G401 (cell line): ENCODE measurements at regions of chr11 and their contacts with region 1.

Region 1: DNA sequence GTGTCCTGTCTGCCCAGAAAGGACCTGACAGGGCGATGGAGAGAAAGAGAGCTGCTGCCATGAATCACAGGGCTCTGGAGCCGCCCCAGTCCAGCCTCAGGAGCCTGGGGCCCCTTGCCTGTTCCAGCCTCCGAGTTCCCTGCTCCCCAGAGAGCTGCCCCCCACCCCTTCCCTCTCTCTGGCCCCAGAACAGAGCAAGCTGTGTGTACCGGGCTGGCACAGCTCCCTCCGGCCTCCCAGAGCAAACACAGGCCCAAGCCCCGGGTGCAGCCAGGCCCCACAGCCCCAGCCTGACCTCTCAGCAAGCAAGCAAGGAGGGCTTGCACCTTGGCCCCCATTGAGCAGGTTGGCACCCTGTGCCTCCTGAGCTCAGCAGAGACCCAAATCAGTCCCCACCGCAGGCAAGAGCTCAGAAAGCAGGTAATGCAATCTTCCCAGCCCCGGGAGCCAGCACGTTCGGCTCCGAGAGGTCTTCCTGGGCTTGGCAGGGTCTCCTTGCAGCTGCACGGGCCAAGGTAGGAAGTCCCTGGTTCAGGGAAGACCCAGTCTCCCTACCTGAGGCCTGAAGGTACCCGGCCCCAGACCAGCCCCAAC is 1.4 kb downstream of the PACSIN3 start:
- DNase-seq: peak; percentile 57

Region 2: GRCh38 chr11:47233989-47234668 is 49.3 kb after region 1 on chr11:
- in situ Hi-C with region 1: loop called (anchors 5 kb)
- DNase-seq: peak; percentile 75

Region 3: GRCh38 chr11:47244448-47245350 is 59.9 kb after region 1 on chr11:
- in situ Hi-C with region 1: no loop called
- DNase-seq: no peak

Region 4: GRCh38 chr11:47259178-47259977 is 74.6 kb after region 1 on chr11:
- in situ Hi-C with region 1: no loop called
- DNase-seq: peak; percentile 30

Region 5: DNA sequence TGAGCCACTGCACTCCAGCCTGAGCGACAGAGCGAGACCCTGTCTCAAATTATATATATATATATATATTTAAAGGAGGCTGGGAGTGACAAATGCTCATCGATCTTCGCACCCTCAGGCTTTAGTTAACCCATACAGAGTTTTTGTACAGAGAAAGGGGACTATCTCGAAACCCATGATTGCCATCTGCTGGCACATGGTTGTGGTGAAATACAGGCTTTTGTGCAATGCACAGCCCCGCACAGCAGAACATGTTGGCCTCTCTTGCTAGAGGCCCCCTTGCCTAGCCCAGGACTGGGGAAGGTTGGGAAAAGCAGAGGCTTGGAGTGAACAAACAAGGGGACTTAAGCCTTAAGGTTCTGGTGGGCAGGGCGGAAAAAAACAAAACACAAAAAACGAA is 164.1 kb after region 1 on chr11:
- in situ Hi-C with region 1: no loop called
- DNase-seq: peak; percentile 45